Dorsolateral prefrontal cortex (tissue), 120 donors: ENCODE measurements at regions of chr3 and their contacts with region 1.

Region 1: GRCh38 chr3:151146071-151146730 is 56.8 kb downstream of the GPR171 start:
- DNase-seq: peak; percentile 33 to 78 (median 67)
- H3K4me3 ChIP-seq: peak overlapping the region in 1 of 59 donors; percentile 26
- H3K27ac ChIP-seq: peak overlapping the region in 6 of 59 donors; percentile 1 to 58 (median 40)
- H3K27me3 ChIP-seq: no peaks in the 10 kb centered on the region
- CTCF ChIP-seq: peak; percentile 52 to 98 (median 92)

Region 2: DNA sequence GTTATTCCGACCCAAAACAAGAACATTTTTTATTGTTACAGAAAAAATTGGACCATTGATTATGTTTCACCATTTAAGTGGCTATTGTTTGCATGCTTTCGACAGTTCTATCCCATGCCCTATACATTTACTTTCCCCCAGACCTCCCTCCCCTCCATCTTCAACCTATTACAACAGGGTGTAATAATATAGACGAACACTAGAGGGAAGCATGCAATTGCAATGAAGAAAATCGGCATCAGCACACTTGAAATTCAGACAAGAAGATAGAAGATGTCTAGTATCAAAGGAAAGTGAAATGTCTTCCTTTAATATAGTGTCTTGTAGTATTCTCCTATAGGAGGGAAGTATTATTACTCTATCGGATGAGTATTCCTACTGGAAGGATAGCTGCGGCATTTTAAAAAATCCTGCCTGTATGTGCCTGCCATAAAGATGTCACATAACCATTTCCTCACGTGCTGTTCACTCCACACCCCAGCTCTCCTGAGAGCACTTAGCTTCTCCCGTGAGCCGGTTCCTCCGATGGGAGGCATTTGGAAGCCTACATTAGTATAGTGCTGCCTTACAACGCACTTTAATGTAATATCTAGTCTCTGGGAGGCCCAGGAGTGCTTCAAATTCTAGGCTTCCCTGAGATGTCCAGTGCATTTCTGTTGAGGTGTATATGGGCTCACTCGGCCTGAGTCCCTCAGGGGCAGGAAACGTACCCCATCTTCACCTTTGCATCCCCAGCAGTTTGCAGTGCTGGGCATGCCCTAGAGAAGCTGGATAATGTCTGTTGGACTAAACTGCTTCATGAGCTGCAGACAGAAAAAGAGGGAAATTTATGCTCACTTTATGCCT is 424.7 kb before region 1 on chr3:
- intact Hi-C with region 1: loop called (anchors 2 to 5 kb)
- DNase-seq: peak in 1 of 10 donors; percentile 23
- H3K4me3 ChIP-seq: peak overlapping the region in 45 of 59 donors; percentile 5 to 51 (median 35)
- H3K27ac ChIP-seq: peak overlapping the region in 13 of 59 donors; percentile 2 to 48 (median 35)
- H3K27me3 ChIP-seq: no peaks in the 10 kb centered on the region
- CTCF ChIP-seq: peak; percentile 73 to 97 (median 88)

Region 3: GRCh38 chr3:150727653-150728502 is 418.3 kb before region 1 on chr3:
- intact Hi-C with region 1: loop called in 1 of 2 experiments (anchors 5 kb)
- DNase-seq: no peak
- H3K4me3 ChIP-seq: no peak overlapping the region
- H3K27ac ChIP-seq: peak overlapping the region in 2 of 59 donors; percentile 15 to 28
- H3K27me3 ChIP-seq: no peaks in the 10 kb centered on the region
- CTCF ChIP-seq: no peak

Region 4: GRCh38 chr3:150787741-150788370 is 358.3 kb before region 1 on chr3:
- intact Hi-C with region 1: loop called (anchors 2 to 5 kb)
- DNase-seq: peak; percentile 78 to 91 (median 86)
- H3K4me3 ChIP-seq: peak overlapping the region in 10 of 59 donors; percentile 4 to 28 (median 16)
- H3K27ac ChIP-seq: peak overlapping the region in 2 of 59 donors; percentile 17 to 20
- H3K27me3 ChIP-seq: no peaks in the 10 kb centered on the region
- CTCF ChIP-seq: peak; percentile 80 to 99 (median 94)

Region 5: DNA sequence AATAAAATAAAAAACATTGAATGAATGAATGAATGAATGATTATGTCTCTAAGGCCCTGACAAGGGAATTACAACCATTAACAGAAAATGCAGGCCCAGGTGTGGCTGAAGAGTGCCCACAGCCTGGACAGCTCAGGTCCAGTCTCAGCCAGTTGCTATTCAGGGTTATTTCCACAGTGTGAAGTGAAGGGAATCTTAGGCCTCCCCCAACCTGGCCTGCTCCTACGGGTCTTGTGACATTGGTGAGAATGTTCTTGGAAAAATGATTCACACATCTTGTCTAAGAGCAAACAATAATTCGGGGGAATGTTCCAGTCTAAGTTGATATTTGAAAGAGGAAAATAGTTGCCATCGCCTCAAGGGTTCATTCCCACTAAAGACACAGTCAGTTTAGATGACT is 277.9 kb before region 1 on chr3:
- intact Hi-C with region 1: loop called in 1 of 2 experiments (anchors 5 kb)
- DNase-seq: no peak
- H3K4me3 ChIP-seq: no peak overlapping the region
- H3K27ac ChIP-seq: no peak overlapping the region
- H3K27me3 ChIP-seq: no peaks in the 10 kb centered on the region
- CTCF ChIP-seq: no peak

Region 6: GRCh38 chr3:151008699-151009098 is 137.5 kb before region 1 on chr3:
- intact Hi-C with region 1: loop called in 1 of 2 experiments (anchors 5 kb)
- DNase-seq: no peak
- H3K4me3 ChIP-seq: no peak overlapping the region
- H3K27ac ChIP-seq: no peak overlapping the region
- H3K27me3 ChIP-seq: peaks cover 0 to 3% (median 0%) of the 10 kb centered on the region in 45 donors
- CTCF ChIP-seq: peak in 26 of 56 donors; percentile 9 to 50 (median 30)

Region 7: DNA sequence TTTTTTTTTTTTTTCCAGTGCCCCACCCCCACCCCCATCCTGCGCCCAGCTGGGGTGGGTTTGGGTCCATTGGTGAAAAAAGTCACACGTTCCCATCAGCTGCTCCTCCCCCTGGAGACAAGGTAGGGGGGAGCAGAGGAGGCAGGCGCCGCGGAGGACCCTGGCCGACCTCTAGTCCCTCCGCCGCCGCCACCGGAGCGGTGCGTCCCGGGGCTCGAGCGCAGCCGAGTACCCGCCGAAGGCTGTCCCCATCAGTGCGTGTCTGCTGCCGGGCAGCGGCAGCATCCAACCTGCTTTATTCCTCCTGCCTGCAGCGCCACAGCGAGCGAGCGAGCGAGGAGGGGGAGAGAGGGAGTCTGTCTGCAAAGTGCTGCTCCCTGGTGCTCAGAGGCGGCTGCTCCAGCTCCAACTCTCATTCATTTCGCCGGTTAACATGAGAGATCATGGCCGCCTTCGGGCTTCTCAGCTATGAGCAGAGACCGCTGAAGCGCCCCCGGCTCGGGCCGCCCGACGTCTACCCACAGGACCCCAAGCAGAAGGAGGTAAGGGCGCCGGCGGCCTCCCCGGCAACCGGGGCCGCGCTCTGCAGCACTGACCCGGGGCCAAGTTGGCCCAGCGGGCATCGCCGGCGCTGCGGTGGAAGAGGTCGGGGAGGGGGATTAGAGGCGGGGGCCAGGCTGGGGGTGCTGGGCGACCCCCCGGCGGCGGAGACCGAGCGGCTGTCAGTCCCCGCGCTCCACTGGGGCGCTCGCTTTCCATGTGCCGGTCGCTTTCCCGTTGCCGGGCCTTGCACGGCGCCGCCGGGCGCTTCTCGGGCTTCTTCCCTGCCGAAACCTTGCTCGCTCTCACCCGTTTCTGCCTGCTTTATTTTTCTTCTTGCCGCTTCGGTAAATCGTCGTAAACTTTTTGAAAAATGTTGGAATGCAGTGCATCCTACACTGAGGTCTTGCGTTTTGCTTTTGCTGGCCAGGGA is 59.4 kb before region 1 on chr3:
- intact Hi-C with region 1: loop called in 1 of 2 experiments (anchors 5 kb)
- DNase-seq: peak; percentile 38 to 86 (median 76)
- H3K4me3 ChIP-seq: peak overlapping the region; percentile 58 to 86 (median 77)
- H3K27ac ChIP-seq: peak overlapping the region in 57 of 59 donors; percentile 23 to 91 (median 81)
- H3K27me3 ChIP-seq: no peaks in the 10 kb centered on the region
- CTCF ChIP-seq: peak in 47 of 56 donors; percentile 16 to 64 (median 44)

Region 8: DNA sequence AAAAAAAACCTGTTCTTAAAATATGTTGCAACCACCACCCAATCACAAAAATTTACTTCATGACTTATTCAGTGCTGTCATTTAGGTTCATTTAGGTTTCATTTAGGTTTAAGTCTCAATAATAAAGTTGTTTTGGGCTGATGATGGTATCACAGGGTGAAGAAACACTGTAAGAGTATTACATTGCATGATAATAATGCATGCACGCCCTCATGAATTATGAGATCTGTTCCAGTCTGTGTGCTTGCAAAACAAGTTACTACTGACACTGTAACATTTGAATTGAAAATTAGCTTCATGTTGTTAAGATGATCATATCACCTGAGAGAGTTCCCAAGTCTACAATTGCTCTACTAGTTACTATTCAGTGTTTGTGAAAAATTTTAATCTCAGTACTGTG is 587.4 kb after region 1 on chr3 and contains the start of gene AADACL2:
- intact Hi-C with region 1: no loop called
- DNase-seq: no peak
- H3K4me3 ChIP-seq: no peak within 1 kb of the TSS
- H3K27ac ChIP-seq: no peak within 1 kb of the TSS
- H3K27me3 ChIP-seq: no peaks in the 10 kb centered on the region
- CTCF ChIP-seq: no peak
- total RNA-seq, gene AADACL2: not detected